Activated T-helper 1 cell treated with anti-CD3 and anti-CD28 coated beads, Interleukin-12 subunit alpha, Interleukin-12 subunit beta, Interleukin-2, Interleukin-4 antibody, amounts not matched to agents 30 ng/mL and 10 ng/mL and 1 ng/mL, durations not matched to agents 14 hours and 24 hours and 36 hours (primary cell): ENCODE measurements at regions of chr17 and their contacts with region 1.

Region 1: DNA sequence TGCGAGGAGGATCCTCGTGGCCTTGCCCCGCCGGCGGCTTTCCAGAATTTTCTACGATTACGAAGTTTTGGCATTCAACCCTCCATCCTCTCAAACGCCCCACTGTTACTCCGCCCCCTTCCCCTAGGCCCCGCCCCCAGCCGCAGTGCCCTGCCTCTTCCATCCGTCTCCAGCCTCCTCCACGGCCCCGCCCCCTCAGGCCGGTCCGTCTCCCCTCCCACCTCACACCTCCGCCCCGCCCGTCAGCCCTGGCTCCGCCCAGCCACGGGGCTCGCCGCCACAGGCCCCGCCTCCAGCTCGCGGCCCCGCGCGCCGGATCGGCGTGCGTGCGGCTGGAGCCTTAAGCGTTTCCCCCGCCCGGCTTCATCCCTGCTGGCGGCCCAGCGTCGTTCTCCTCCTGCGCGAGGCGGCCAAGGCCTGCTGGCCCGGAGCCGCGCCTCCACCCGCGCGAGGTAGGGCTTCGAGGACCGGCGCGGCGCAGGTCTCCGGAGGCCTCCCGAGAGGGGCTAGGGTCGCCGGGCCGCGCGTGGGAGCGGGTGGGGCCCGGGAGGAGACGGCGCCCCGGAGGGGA is at the starts of genes C17orf67 and DGKE:
- DNase-seq: peak; percentile 97
- H3K4me3 Mint-ChIP-seq: peak within 1 kb of the TSS; percentile 94
- H3K27ac Mint-ChIP-seq: peak within 1 kb of the TSS; percentile 96
- H3K4me1 Mint-ChIP-seq: peaks cover 65% of the 10 kb centered on the region
- H3K27me3 Mint-ChIP-seq: no peaks in the 10 kb centered on the region
- total RNA-seq, gene C17orf67: 3.1 TPM in 2 replicates
- total RNA-seq, gene DGKE: 31.8 and 34.3 TPM in 2 replicates

Region 2: DNA sequence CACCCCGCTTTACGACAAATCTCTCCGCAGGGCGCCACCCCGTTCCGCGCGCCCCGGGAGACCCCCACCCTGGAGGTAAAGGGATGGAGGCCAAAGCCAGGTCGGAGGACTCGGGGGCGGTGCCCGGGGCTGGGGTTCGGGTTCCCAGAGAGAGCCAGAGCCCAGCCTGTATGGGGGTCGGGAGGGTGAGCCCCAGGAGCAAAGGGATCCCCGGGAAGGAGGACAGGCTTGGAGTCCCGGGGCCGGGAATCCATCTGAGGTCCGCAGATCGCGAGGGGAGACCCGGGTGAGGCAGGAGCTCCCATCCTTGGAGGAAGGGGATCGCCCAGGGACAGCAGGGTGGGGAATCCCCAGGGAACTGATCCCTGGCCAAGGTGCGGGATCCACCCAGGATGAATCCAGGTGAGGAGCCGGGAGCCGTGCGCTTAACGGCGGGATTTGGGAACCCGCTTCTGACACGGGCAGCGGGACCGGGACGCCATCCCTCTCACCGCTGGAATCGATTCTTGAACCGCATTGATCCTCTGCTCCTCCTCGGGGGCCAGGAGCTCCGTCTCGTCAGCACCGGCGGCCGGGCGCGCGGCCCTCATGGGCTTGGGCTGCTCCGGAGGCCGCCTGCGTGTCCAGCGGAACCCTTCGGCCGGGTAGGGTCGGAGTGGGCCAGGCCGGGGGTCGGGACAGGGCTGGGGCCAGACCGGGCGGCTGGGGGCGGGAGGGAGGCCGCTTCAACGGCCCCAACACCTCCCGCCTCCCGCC is 1412.5 kb before region 1 on chr17 and contains the start of gene MMD:
- intact Hi-C with region 1: loop called (anchors 5 kb)
- DNase-seq: no peak
- H3K4me3 Mint-ChIP-seq: peak within 1 kb of the TSS; percentile 93
- H3K27ac Mint-ChIP-seq: peak within 1 kb of the TSS; percentile 93
- H3K4me1 Mint-ChIP-seq: peaks cover 53% of the 10 kb centered on the region
- H3K27me3 Mint-ChIP-seq: peaks cover 19% of the 10 kb centered on the region
- total RNA-seq, gene MMD: 24.1 and 24.6 TPM in 2 replicates

Region 3: DNA sequence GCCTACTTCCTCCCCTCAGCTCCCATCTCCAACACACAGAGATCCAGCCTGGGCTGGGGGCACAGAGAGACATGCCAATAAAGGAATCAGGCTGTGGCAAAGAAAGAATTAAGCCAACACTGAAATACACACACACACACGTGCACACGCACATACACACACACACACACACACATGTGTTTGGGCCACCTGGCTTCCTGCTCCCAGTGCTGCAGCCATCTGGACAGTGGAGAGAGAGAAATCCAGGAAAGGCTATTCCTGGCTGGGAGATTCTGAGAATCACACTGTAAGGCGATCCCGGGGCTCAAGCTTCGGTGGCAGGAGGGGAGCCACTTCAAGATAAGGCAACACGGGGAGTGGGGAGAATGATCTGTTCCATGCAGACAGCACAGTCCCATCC is 168.0 kb before region 1 on chr17:
- intact Hi-C with region 1: no loop called
- DNase-seq: no peak
- H3K4me3 Mint-ChIP-seq: no peak overlapping the region
- H3K27ac Mint-ChIP-seq: no peak overlapping the region
- H3K4me1 Mint-ChIP-seq: no peaks in the 10 kb centered on the region
- H3K27me3 Mint-ChIP-seq: peaks cover 38% of the 10 kb centered on the region

Region 4: GRCh38 chr17:56786989-56787482 is 46.9 kb before region 1 on chr17:
- intact Hi-C with region 1: loop called (anchors 2 kb)
- DNase-seq: peak; percentile 34
- H3K4me3 Mint-ChIP-seq: peak overlapping the region; percentile 40
- H3K27ac Mint-ChIP-seq: peak overlapping the region; percentile 82
- H3K4me1 Mint-ChIP-seq: peaks cover 30% of the 10 kb centered on the region
- H3K27me3 Mint-ChIP-seq: peaks cover 2% of the 10 kb centered on the region

Region 5: DNA sequence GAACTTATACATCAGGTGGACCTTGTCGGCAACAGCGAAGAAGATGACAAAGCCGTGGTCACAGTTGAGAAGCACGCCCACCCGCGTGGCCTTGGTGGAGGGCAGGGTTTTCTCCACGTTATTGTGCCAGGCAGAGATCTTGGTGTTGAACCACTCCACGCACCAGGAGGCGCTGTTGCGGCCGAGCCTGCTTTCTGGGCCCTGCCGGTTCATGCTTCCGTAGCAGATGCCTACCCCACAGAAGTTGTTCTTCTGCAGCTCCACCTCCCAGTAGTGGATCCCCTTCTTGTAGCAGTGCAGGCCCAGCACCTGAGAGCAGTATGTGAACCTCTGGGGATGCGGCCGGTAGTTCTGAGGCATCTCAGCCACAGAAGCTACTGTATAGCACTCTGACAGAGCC is 57.9 kb after region 1 on chr17:
- intact Hi-C with region 1: no loop called
- DNase-seq: no peak
- H3K4me3 Mint-ChIP-seq: no peak overlapping the region
- H3K27ac Mint-ChIP-seq: no peak overlapping the region
- H3K4me1 Mint-ChIP-seq: no peaks in the 10 kb centered on the region
- H3K27me3 Mint-ChIP-seq: no peaks in the 10 kb centered on the region

Region 6: DNA sequence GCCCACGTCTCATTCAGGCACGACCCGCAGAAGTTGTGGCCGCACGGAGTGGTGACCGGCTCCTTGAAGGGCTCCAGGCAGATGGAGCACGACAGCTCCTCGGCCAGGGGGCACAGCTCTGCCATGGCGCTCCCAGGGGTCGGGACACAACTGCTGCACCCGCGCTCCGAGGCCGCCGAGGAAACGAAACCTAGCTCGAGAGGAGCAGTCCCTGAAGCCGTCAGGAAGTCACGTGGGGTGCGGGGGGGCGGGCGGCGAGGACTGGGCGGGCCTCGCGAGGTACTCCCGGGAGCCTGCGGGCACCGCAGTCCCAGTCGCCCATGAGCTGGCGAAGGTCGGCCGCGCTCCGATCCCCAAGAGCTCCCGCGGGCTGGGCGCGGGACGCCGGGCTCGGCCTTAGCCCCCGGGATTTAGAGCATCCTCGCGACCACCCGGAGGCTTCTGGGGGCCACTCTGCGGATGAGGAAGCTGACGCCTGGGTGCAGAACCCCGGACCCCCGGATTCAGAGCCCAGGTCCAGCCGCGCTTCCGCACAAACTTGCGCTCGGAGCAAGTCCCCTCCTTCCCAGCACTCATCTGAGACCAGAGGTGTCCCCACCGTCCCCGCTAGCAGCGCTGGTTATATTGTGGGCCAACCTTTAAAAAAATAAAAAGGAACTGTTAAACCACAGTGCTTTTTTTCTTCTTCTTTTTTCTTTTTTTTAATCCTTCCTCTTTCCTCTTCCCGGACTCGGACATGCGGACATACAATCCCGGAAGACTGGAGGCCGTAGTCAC is 80.2 kb after region 1 on chr17 and contains the start of gene TRIM25:
- intact Hi-C with region 1: loop called (anchors 1 kb)
- DNase-seq: peak; percentile 76
- H3K4me3 Mint-ChIP-seq: peak within 1 kb of the TSS; percentile 93
- H3K27ac Mint-ChIP-seq: peak within 1 kb of the TSS; percentile 95
- H3K4me1 Mint-ChIP-seq: peaks cover 65% of the 10 kb centered on the region
- H3K27me3 Mint-ChIP-seq: peaks cover 2% of the 10 kb centered on the region
- total RNA-seq, gene TRIM25: 86.9 and 98.2 TPM in 2 replicates

Region 7: GRCh38 chr17:56960596-56961538 is 127.0 kb after region 1 on chr17 and contains the start of gene COIL:
- intact Hi-C with region 1: loop called (anchors 2 kb)
- DNase-seq: peak; percentile 89
- H3K4me3 Mint-ChIP-seq: peak within 1 kb of the TSS; percentile 82
- H3K27ac Mint-ChIP-seq: peak within 1 kb of the TSS; percentile 84
- H3K4me1 Mint-ChIP-seq: peaks cover 22% of the 10 kb centered on the region
- H3K27me3 Mint-ChIP-seq: no peaks in the 10 kb centered on the region
- total RNA-seq, gene COIL: 21.0 and 25.2 TPM in 2 replicates

Region 8: GRCh38 chr17:57084802-57085447 is 251.0 kb after region 1 on chr17 and contains the start of gene AKAP1:
- intact Hi-C with region 1: loop called (anchors 1 kb)
- DNase-seq: peak; percentile 96
- H3K4me3 Mint-ChIP-seq: peak within 1 kb of the TSS; percentile 92
- H3K27ac Mint-ChIP-seq: peak within 1 kb of the TSS; percentile 87
- H3K4me1 Mint-ChIP-seq: peaks cover 28% of the 10 kb centered on the region
- H3K27me3 Mint-ChIP-seq: peaks cover 9% of the 10 kb centered on the region
- total RNA-seq, gene AKAP1: 53.8 and 59.9 TPM in 2 replicates

Region 9: DNA sequence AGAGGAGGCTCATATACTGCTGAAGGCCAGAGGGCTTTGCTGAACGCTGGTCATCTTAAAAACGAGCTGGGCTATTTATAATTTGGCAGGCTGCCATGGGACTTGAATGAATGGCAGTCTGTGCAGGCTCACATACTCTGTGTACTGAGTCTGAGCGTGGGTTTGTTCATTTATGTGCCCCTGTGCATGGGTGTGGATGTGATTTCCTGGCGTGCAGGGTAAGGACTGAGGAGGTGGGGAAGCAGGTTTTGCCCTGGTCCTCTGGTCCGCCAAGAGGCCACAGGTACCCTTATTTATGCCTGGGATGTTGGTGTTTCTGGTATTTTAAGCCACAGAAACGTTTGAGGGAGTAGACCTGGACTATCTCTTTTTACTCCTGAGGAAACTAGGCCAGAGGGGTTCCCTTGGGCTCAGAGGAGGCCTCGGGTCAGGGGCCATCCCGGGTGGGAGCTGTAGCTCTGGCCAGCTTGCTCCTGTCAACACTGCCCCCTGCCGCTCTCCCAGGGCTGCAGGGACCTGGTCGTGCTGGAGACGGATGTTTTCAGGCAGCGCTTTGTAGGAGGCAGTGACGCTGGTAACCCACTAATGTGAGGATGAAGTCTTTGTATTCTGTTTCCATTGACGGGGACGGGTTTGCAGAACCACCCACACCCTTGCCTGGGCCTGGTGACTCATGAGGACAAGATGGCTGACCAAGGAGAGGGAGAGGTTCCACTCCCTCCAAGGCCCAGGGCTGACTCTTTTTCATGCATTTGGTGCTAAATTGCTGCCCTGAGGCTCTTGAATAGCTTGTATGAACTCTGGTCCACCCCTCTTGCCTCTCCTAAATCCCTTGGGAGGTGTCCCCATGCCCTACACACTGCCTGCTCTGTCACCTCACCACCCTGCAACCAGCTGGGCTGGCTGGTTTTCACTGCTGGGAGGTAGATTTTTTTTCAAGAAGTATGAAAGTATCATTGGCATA is 606.9 kb after region 1 on chr17:
- intact Hi-C with region 1: loop called (anchors 5 kb)
- DNase-seq: peak; percentile 66
- H3K4me3 Mint-ChIP-seq: peak overlapping the region; percentile 72
- H3K27ac Mint-ChIP-seq: peak overlapping the region; percentile 98
- H3K4me1 Mint-ChIP-seq: peaks cover 93% of the 10 kb centered on the region
- H3K27me3 Mint-ChIP-seq: peaks cover 2% of the 10 kb centered on the region